PC-3 (cell line): ENCODE measurements at regions of chr4 and their contacts with region 1.

Region 1: DNA sequence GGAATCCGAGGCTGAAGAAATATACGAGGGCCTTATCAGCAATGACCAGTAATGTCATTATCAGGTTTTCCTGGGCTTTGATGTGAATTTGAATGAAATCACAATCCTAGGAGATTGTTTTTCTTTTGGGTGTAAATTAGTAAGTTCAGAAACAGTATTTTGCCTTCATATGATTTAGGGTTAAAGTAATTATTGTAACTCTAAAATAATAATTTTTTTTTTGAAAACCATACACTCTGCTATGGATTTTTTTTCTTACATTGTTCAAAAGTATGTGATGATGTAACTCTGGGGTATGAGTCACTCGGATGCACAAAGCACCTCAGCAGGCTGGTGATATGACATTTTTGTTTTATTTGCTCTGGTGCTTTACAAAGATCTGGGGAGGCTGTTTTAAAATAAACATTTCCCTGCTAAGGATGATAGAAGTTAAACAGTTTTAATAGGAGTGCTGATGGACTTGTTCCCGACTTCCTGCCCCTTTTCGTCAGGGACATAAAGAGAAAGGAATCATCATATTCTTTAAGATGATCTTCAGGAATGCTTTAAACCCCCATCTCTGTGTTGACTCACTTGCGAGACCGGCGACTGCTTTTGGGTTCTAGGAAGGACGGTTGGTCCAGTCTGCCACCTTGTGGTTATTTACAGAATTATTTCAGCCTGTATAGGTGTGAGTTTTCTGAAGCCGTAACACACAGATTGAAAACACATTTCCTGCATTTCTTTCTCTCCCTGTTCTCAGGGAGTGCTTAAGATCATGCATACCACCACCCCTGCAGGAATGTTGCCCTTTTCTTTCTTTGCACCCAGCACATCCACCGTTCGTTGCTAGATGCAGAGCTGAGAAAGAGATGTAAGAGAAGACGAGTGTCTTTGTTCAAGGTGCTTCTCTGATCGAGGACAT is 72.5 kb downstream of the RAPGEF2 start:
- DNase-seq: peak; percentile 89
- ATAC-seq: peak; percentile 88
- H3K4me3 ChIP-seq: peak overlapping the region; percentile 66
- H3K27ac ChIP-seq: peak overlapping the region; percentile 65
- H3K4me1 ChIP-seq: peaks cover 30% of the 10 kb centered on the region
- H3K27me3 ChIP-seq: no peaks in the 10 kb centered on the region
- CTCF ChIP-seq: peak; percentile 86

Region 2: DNA sequence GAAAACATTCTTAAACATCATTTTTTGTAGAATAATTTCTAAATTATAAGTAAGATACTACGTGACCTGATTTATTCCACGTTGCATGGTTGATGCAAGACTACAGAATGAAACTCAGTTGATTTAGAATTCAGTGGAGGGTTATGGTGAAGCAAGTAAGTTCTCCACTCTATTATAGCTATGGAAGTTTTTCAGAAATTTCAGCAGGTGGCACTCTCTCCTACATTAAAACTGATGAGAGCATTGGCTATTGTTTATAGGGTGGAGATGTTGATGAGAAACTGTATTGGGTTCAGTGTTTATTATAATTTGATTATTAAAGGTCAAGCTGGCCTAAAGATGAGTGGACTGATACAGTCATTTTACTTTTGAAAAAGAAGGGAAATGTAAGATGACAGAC is 318.5 kb before region 1 on chr4:
- CTCF ChIA-PET with region 1: no interaction called
- POLR2A ChIA-PET with region 1: no interaction called
- intact Hi-C with region 1: loop called (anchors 1 kb)
- DNase-seq: peak; percentile 52
- ATAC-seq: peak; percentile 88
- H3K4me3 ChIP-seq: no peak overlapping the region
- H3K27ac ChIP-seq: no peak overlapping the region
- H3K4me1 ChIP-seq: peaks cover 23% of the 10 kb centered on the region
- H3K27me3 ChIP-seq: no peaks in the 10 kb centered on the region
- CTCF ChIP-seq: peak; percentile 69

Region 3: DNA sequence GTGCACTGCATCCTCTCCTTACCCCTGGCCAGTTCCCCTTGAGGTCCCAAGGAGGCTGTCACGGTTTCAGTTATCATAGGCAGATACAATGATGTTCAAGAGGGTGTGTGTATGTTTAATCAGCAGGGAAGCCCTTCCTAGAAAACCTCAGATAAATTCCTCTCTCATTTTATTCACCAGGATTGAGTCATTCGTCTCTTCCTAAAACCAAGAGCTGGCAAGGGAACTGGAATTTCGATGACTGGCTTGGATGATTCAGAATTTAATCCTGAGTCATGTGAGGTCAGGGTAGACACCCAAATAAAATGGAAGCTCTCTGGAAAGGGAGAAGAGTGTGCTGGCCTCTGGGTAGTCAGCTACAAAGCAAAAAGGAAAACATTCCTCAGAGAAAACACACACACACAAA is 178.7 kb before region 1 on chr4:
- CTCF ChIA-PET with region 1: no interaction called
- POLR2A ChIA-PET with region 1: no interaction called
- intact Hi-C with region 1: loop called (anchors 2 kb)
- DNase-seq: peak; percentile 97
- ATAC-seq: peak; percentile 90
- H3K4me3 ChIP-seq: no peak overlapping the region
- H3K27ac ChIP-seq: peak overlapping the region; percentile 78
- H3K4me1 ChIP-seq: peaks cover 33% of the 10 kb centered on the region
- H3K27me3 ChIP-seq: no peaks in the 10 kb centered on the region
- CTCF ChIP-seq: no peak

Region 4: GRCh38 chr4:159097785-159098184 is 77.6 kb before region 1 on chr4:
- CTCF ChIA-PET with region 1: no interaction called
- POLR2A ChIA-PET with region 1: no interaction called
- intact Hi-C with region 1: no loop called
- DNase-seq: no peak
- ATAC-seq: no peak
- H3K4me3 ChIP-seq: no peak overlapping the region
- H3K27ac ChIP-seq: no peak overlapping the region
- H3K4me1 ChIP-seq: peaks cover 6% of the 10 kb centered on the region; the same call in 1 of the 2 replicates
- H3K27me3 ChIP-seq: no peaks in the 10 kb centered on the region
- CTCF ChIP-seq: no peak

Region 5: DNA sequence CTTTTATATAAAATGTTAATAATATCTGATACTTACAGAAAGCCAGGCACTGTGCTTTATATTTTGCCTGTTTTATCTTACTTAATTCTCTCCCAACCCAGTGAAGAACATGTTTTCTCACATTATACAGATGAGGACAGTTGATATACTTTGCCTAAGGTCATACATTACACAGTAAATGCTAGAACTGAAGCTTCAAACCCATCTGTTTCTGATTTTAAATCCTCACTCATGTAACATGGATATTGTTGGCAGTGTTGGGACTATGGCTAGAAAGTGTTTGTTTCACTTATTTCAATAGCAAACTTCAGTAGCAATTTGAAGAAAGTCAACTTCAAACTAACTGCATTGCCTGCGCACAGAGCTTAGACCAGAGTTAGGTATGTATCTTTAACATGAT is 15.1 kb before region 1 on chr4:
- CTCF ChIA-PET with region 1: no interaction called
- POLR2A ChIA-PET with region 1: no interaction called
- intact Hi-C with region 1: no loop called
- DNase-seq: no peak
- ATAC-seq: no peak
- H3K4me3 ChIP-seq: no peak overlapping the region
- H3K27ac ChIP-seq: no peak overlapping the region
- H3K4me1 ChIP-seq: no peaks in the 10 kb centered on the region
- H3K27me3 ChIP-seq: no peaks in the 10 kb centered on the region
- CTCF ChIP-seq: no peak

Region 6: GRCh38 chr4:159191989-159192388 is 16.7 kb after region 1 on chr4:
- CTCF ChIA-PET with region 1: no interaction called
- POLR2A ChIA-PET with region 1: no interaction called
- intact Hi-C with region 1: no loop called
- DNase-seq: peak; percentile 81
- ATAC-seq: peak; percentile 22; the same call in 1 of the 2 replicates
- H3K4me3 ChIP-seq: no peak overlapping the region
- H3K27ac ChIP-seq: no peak overlapping the region
- H3K4me1 ChIP-seq: peaks cover 4% of the 10 kb centered on the region; the same call in 1 of the 2 replicates
- H3K27me3 ChIP-seq: no peaks in the 10 kb centered on the region
- CTCF ChIP-seq: peak; percentile 79

Region 7: GRCh38 chr4:159206427-159206871 is 31.1 kb after region 1 on chr4:
- CTCF ChIA-PET with region 1: no interaction called
- POLR2A ChIA-PET with region 1: no interaction called
- intact Hi-C with region 1: loop called (anchors 1 kb)
- DNase-seq: peak; percentile 35
- ATAC-seq: peak; percentile 57
- H3K4me3 ChIP-seq: no peak overlapping the region
- H3K27ac ChIP-seq: no peak overlapping the region; the same call in 1 of the 2 replicates
- H3K4me1 ChIP-seq: peaks cover 12% of the 10 kb centered on the region
- H3K27me3 ChIP-seq: no peaks in the 10 kb centered on the region
- CTCF ChIP-seq: no peak

Region 8: GRCh38 chr4:159390648-159391047 is 215.3 kb after region 1 on chr4:
- CTCF ChIA-PET with region 1: no interaction called
- POLR2A ChIA-PET with region 1: no interaction called
- intact Hi-C with region 1: no loop called
- DNase-seq: peak; percentile 97
- ATAC-seq: peak; percentile 96
- H3K4me3 ChIP-seq: no peak overlapping the region
- H3K27ac ChIP-seq: peak overlapping the region; percentile 76
- H3K4me1 ChIP-seq: peaks cover 11% of the 10 kb centered on the region
- H3K27me3 ChIP-seq: no peaks in the 10 kb centered on the region
- CTCF ChIP-seq: no peak